CD8-positive, alpha-beta T cell (primary cell): ENCODE measurements at regions of chr16 and their contacts with region 1.

Region 1: DNA sequence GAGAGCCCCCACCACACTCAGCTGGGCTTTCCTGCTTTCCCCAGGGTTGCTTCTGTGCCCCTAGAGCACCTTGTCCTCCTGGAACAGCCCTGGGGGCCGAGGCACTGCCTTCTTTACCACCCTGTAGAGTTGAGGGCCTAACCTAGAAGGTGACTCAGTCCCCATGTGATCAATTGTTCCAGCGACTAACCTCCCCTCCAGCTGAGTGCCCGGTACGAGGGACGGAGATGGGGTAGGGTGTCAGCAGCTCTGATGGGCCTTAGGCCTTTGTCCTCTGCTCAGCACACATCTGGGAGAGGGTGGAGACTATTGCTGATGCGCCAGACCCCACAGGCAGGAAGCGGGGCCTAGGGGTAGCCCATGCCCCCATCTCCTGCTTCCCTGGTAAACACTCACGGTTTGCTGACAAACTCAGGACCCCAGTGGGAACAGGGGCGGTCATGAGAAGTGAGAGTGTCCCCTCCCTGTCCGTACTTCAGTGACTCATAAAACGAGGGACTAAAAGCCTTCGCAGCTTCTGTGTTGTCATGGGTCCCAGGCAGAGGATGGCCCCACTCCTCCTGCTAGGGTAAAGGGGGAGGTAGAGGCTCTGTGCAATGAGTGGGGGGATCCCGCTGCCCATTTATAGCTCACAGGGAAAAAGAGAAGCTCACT is 33.1 kb downstream of the NECAB2 start:
- DNase-seq: no peak
- ATAC-seq: no peak
- H3K4me3 ChIP-seq: no peak overlapping the region
- H3K4me3 Mint-ChIP-seq: no peak overlapping the region
- H3K27ac ChIP-seq: no peak overlapping the region
- H3K27ac Mint-ChIP-seq: no peak overlapping the region
- H3K4me1 ChIP-seq: no peaks in the 10 kb centered on the region
- H3K4me1 Mint-ChIP-seq: peaks cover under 1% of the 10 kb centered on the region
- H3K27me3 ChIP-seq: no peaks in the 10 kb centered on the region
- H3K27me3 Mint-ChIP-seq: peaks cover 22% of the 10 kb centered on the region
- CTCF ChIP-seq: no peak

Region 2: GRCh38 chr16:84013787-84014569 is 12.9 kb after region 1 on chr16:
- CTCF ChIA-PET with region 1: no interaction called
- POLR2A ChIA-PET with region 1: no interaction called
- intact Hi-C with region 1: no loop called
- DNase-seq: peak in 7 of 9 experiments; percentile 3 to 70 (median 34)
- ATAC-seq: peak; percentile 83
- H3K4me3 ChIP-seq: peak overlapping the region in 1 of 2 experiments; percentile 2
- H3K4me3 Mint-ChIP-seq: peak overlapping the region; percentile 22
- H3K27ac ChIP-seq: no peak overlapping the region
- H3K27ac Mint-ChIP-seq: no peak overlapping the region
- H3K4me1 ChIP-seq: peaks cover 6% of the 10 kb centered on the region
- H3K4me1 Mint-ChIP-seq: peaks cover 8% of the 10 kb centered on the region
- H3K27me3 ChIP-seq: no peaks in the 10 kb centered on the region
- H3K27me3 Mint-ChIP-seq: peaks cover 5% of the 10 kb centered on the region
- CTCF ChIP-seq: no peak

Region 3: GRCh38 chr16:84055366-84055765 is 54.2 kb after region 1 on chr16:
- CTCF ChIA-PET with region 1: no interaction called
- POLR2A ChIA-PET with region 1: no interaction called
- intact Hi-C with region 1: loop called in 1 of 2 experiments (anchors 2 kb)
- DNase-seq: no peak
- ATAC-seq: no peak
- H3K4me3 ChIP-seq: no peak overlapping the region
- H3K4me3 Mint-ChIP-seq: no peak overlapping the region
- H3K27ac ChIP-seq: no peak overlapping the region
- H3K27ac Mint-ChIP-seq: no peak overlapping the region
- H3K4me1 ChIP-seq: no peaks in the 10 kb centered on the region
- H3K4me1 Mint-ChIP-seq: no peaks in the 10 kb centered on the region
- H3K27me3 ChIP-seq: no peaks in the 10 kb centered on the region
- H3K27me3 Mint-ChIP-seq: no peaks in the 10 kb centered on the region
- CTCF ChIP-seq: no peak